ENCODE measurements at regions of chrX and their contacts with region 1.

Region 1: GRCh38 chrX:83845397-83845796 is 15.5 kb upstream of the CYLC1 start:
- DNase-seq: peak; percentile 3
- ATAC-seq: no peak
- H3K4me3 Mint-ChIP-seq: no peak overlapping the region
- H3K27ac Mint-ChIP-seq: no peak overlapping the region
- H3K4me1 Mint-ChIP-seq: no peaks in the 10 kb centered on the region
- H3K27me3 Mint-ChIP-seq: no peaks in the 10 kb centered on the region

Region 2: DNA sequence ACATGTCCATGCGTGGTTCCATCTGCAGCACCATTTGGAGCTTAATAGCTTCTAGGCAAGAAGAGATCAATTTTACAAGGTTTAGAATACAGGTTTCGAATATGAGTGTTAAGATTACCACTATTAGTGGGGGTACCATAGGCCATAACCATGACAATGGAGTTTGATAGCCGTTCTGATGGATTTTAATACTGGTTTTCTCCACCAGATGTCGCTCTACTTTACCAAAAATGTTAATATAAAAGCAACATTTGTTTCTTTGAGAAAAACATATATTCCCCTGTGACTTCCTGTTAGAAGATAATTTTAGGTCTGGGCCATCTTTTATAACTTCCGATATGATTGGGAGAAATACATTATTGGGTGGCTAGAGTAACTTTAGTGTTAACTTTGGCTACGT is 837.0 kb before region 1 on chrX:
- CTCF ChIA-PET with region 1: no interaction called
- POLR2A ChIA-PET with region 1: no interaction called
- intact Hi-C with region 1: loop called in 1 of 2 experiments (anchors 5 kb)
- DNase-seq: no peak
- ATAC-seq: no peak
- H3K4me3 Mint-ChIP-seq: no peak overlapping the region
- H3K27ac Mint-ChIP-seq: no peak overlapping the region
- H3K4me1 Mint-ChIP-seq: no peaks in the 10 kb centered on the region
- H3K27me3 Mint-ChIP-seq: no peaks in the 10 kb centered on the region

Region 3: DNA sequence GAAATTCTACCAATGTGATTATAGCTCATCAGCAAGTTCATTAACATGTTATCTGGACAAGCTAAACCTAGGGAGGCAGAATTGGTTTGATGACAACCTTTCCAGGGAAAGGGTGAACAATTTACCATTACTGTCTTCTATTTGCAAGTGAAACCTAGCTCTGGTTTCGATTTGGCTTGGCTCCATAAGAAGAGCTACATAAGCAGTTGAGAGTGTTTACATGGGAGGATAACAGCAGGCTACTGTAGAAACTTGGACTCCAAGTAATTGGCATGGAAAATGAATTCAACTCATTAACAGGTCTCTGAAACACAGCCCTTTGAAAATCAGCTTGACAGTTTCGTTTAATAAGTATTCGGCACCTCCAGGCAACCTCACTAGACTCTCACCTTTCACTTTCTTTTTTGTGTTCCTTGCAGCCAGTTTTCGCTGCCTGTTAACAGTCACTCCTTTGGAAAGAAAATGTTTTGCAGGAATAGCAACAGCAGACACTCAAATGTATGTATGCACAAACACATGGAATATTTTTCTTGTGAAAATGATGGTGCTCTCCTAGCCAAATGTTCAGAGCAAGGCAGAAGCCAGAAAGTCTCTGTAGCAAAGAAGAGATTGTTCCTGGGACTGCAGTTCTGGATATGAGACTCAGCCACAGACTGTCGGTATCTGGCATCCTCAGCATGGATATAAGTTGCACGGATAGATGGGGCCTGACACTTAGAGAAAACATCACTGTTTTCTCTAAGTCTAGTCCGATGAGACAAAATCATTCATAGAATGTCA is 309.8 kb before region 1 on chrX:
- CTCF ChIA-PET with region 1: no interaction called
- POLR2A ChIA-PET with region 1: no interaction called
- intact Hi-C with region 1: no loop called
- DNase-seq: no peak
- ATAC-seq: no peak
- H3K4me3 Mint-ChIP-seq: peak overlapping the region; percentile 15
- H3K27ac Mint-ChIP-seq: no peak overlapping the region
- H3K4me1 Mint-ChIP-seq: no peaks in the 10 kb centered on the region
- H3K27me3 Mint-ChIP-seq: no peaks in the 10 kb centered on the region

Region 4: DNA sequence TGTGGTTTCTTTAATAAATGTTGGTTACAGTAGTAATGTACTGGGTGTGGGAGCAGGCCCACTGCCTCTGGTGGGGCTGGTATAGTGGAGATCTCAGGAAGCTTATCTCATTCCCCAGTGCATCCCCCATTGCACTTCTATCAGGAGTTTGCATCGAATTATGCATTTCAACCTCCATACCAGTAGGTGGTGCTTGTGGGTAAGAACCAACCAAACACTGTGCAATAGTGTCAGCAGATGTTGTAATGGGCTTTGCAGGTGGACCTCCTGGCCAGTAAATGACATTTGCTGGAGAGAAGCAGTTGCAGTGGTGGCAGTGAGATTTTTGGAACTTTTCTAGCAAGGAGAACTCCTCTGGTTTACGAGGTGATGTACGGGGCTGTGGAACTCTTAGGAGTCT is 186.7 kb before region 1 on chrX:
- CTCF ChIA-PET with region 1: no interaction called
- POLR2A ChIA-PET with region 1: no interaction called
- intact Hi-C with region 1: loop called in 1 of 2 experiments (anchors 10 kb)
- DNase-seq: no peak
- ATAC-seq: no peak
- H3K4me3 Mint-ChIP-seq: no peak overlapping the region
- H3K27ac Mint-ChIP-seq: no peak overlapping the region
- H3K4me1 Mint-ChIP-seq: no peaks in the 10 kb centered on the region
- H3K27me3 Mint-ChIP-seq: no peaks in the 10 kb centered on the region